ENCODE measurements at regions of chr1 and their contacts with region 1.

Region 1: DNA sequence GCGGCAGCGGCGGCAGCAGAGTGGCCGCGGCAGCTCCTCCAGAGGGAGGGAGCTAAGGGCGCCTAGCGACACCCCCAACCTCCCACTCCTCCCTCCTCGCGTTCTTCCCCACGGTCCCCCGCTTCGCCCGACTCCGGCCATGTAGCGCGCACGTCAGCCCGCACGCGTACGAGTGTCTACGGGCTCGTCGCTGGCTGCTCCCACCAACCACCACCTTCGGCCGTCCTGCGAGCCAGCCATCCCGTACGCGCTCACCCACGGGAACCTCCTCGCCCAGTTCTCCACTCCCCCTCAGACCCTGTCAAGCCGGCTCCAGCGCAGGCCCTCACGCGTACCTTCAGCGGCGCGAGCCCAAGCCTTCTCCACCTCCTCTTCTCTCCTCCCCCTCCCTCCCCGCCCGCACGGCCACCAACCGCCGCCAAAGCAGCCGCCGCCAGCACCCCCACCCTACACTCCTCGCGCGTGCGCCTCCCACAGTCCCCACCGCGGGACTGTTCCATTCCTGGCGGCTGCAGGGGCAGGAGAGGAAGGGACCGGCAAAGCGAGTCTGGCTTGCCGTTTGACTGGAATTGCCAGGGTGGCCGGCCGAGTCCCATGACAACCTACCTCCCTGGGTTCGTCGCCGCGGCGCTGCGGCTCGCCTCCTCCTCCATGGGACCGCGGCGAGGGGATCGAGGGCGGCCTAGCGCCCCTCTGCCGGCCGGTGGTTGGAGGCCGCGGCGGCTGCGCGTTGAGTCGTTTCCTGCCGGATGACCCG is at the start of gene YY1AP1:
- DNase-seq: peak; percentile 90 to 93
- H3K4me3 ChIP-seq: peak within 1 kb of the TSS; percentile 92
- H3K4me3 Mint-ChIP-seq: peak within 1 kb of the TSS; percentile 98
- H3K27ac Mint-ChIP-seq: peak within 1 kb of the TSS; percentile 97
- H3K4me1 ChIP-seq: peaks cover 11% of the 10 kb centered on the region
- H3K4me1 Mint-ChIP-seq: peaks cover 6% of the 10 kb centered on the region
- H3K27me3 ChIP-seq: no peaks in the 10 kb centered on the region
- H3K27me3 Mint-ChIP-seq: no peaks in the 10 kb centered on the region
- CTCF ChIP-seq: peak; percentile 10 to 13
- total RNA-seq, gene YY1AP1: 61.1 and 63.0 TPM in 2 replicates

Region 2: DNA sequence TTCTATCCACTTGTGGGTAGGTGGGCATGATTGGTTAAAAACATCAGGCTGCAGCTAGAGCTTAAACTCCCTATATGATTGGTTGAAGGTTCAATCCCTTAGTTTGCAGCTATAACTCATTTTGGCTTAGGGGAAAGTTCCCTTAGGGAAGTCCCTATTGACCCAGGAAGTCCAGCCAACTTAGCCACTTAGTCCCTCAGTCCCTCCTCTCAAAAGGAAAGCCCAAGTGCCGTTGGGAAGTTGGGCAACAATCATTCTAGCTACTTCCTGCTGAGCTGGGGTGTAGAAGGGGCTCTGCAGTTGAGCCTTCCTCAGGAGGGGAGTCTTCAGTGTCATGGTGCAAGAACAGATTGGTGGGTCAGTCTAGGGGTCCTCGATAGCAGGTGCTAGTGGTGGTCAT is 66.3 kb before region 1 on chr1:
- CTCF ChIA-PET with region 1: no interaction called
- POLR2A ChIA-PET with region 1: no interaction called
- intact Hi-C with region 1: no loop called
- DNase-seq: no peak
- H3K4me3 ChIP-seq: no peak overlapping the region
- H3K4me3 Mint-ChIP-seq: no peak overlapping the region
- H3K27ac Mint-ChIP-seq: no peak overlapping the region
- H3K4me1 ChIP-seq: no peaks in the 10 kb centered on the region
- H3K4me1 Mint-ChIP-seq: peaks cover 6% of the 10 kb centered on the region
- H3K27me3 ChIP-seq: no peaks in the 10 kb centered on the region
- H3K27me3 Mint-ChIP-seq: no peaks in the 10 kb centered on the region
- CTCF ChIP-seq: no peak

Region 3: DNA sequence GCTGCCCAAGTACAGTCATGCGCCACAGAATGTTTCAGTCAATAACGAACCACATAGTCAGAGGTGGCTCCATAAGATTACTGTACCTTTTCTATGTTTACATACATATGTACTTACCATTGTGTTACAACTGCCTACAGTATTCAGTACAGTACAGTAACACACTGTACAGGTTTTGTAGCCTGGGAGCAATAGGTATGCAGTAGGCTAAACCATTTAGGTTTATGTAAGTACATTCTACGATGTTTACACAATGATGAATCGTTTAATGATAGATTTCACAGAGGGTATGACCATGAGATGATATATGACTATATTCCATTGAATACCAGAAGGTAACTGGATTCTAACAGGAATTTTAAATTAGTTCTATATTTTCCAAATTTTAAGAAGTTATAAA is 10.5 kb before region 1 on chr1:
- CTCF ChIA-PET with region 1: no interaction called
- POLR2A ChIA-PET with region 1: no interaction called
- intact Hi-C with region 1: no loop called
- DNase-seq: no peak
- H3K4me3 ChIP-seq: no peak overlapping the region
- H3K4me3 Mint-ChIP-seq: no peak overlapping the region
- H3K27ac Mint-ChIP-seq: no peak overlapping the region
- H3K4me1 ChIP-seq: no peaks in the 10 kb centered on the region
- H3K4me1 Mint-ChIP-seq: no peaks in the 10 kb centered on the region
- H3K27me3 ChIP-seq: no peaks in the 10 kb centered on the region
- H3K27me3 Mint-ChIP-seq: no peaks in the 10 kb centered on the region
- CTCF ChIP-seq: no peak

Region 4: DNA sequence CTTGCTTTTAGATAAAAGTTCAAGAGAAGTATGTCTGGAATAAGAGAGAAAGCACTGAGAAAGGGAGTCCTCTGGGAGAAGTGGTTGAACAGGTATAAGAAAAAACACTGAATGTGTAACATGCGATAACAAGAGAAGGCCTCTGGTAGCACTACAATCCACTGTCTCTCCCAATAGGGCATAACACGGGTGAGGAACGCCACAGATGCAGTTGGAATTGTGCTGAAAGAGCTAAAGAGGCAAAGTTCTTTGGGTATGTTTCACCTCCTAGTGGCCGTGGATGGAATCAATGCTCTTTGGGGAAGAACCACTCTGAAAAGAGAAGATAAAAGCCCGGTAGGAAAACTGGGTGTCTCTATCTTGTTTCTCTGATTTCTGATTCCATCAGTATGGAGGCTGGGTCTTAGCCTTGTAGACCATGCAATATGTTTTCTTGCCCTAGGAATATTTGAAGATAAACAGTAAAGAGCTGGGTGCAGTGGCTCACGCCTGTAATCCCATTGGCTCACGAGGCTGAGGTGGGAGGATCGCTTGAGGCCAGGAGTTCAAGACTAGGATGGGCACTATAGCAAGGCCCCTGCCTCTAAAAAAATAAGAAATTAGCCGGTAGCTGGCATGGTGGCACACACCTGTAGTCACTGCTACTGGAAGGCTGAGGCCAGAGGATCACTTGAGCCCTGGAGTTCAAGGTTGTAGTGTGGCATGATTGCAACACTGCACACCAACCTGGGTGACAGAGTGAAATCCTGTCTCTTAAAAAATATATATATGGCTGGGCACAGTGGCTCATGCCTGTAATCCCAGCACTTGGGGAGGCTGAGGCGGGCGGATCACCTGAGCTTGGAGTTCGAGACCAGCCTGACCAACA is 40.8 kb after region 1 on chr1:
- CTCF ChIA-PET with region 1: interaction called, 7 read pairs
- POLR2A ChIA-PET with region 1: no interaction called
- intact Hi-C with region 1: loop called (anchors 5 kb)
- DNase-seq: peak; percentile 76 to 80
- H3K4me3 ChIP-seq: no peak overlapping the region
- H3K4me3 Mint-ChIP-seq: no peak overlapping the region
- H3K27ac Mint-ChIP-seq: no peak overlapping the region
- H3K4me1 ChIP-seq: 0 out of 2 replicates have a peak, but pooled peaks cover 4% of the 10 kb centered on the region
- H3K4me1 Mint-ChIP-seq: no peaks in the 10 kb centered on the region
- H3K27me3 ChIP-seq: no peaks in the 10 kb centered on the region
- H3K27me3 Mint-ChIP-seq: no peaks in the 10 kb centered on the region
- CTCF ChIP-seq: peak; percentile 64 to 67